ENCODE measurements at regions of chr1 and their contacts with region 1.

Region 1: GRCh38 chr1:209692745-209693504 is 11.7 kb upstream of the HSD11B1 start:
- DNase-seq: peak; percentile 70
- ATAC-seq: peak; percentile 41
- H3K4me3 ChIP-seq: no peak overlapping the region
- H3K4me3 Mint-ChIP-seq: no peak overlapping the region
- H3K27ac ChIP-seq: no peak overlapping the region
- H3K27ac Mint-ChIP-seq: no peak overlapping the region
- H3K4me1 ChIP-seq: peaks cover 4 to 7% of the 10 kb centered on the region in 2 donors
- H3K4me1 Mint-ChIP-seq: peaks cover 3% of the 10 kb centered on the region
- H3K27me3 ChIP-seq: peaks cover 0 to 3% (median 1%) of the 10 kb centered on the region in 4 experiments
- H3K27me3 Mint-ChIP-seq: peaks cover 19% of the 10 kb centered on the region
- CTCF ChIP-seq: peak; percentile 90

Region 2: DNA sequence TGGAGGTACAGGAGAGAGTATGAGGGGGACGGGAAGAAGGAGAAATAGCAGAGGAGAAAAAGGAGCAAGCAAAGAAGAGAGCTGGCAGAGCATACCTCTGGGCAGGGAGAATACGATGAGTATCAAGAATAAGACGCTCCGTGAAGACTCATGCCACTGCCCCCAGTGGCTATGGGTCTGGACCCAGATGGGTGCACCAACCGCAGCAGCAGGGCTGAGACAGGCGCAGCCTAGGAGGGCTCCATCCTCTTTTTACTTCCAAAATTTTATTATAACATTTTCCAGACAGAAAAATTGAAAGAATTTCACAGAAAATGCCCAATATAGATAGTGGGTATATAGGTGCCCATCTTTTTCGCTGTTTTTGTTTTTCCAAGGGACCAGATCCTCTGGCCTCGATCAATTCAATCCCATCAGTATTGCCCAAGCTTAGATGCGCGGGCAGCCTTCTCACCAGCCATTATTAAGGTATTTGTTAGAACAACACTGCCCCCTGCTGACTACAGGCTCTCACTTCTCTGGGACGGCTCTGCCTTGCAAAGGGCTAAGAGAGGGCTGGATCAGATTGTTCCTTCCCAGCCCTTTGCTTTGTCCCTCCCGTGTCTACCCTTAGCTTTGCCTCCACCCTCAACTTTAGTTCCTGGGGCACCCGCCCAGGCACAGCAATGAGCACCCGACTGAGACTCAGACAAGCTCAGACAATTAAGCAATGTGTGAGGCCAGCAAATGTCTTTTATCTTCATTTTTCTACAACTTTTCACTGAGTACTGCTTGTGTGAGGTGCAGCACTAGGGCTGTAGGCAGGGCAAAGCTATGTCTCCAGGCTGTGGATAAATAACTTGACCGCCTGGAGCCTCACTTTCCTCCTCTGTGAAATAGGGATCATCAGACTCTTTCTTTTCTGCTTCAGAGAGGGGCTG is 126.9 kb before region 1 on chr1:
- CTCF ChIA-PET with region 1: interaction called, 59 read pairs
- POLR2A ChIA-PET with region 1: no interaction called
- intact Hi-C with region 1: no loop called
- DNase-seq: peak; percentile 63
- ATAC-seq: no peak
- H3K4me3 ChIP-seq: no peak overlapping the region
- H3K4me3 Mint-ChIP-seq: no peak overlapping the region
- H3K27ac ChIP-seq: no peak overlapping the region
- H3K27ac Mint-ChIP-seq: no peak overlapping the region
- H3K4me1 ChIP-seq: peaks cover 4 to 5% of the 10 kb centered on the region in 2 donors
- H3K4me1 Mint-ChIP-seq: peaks cover 5% of the 10 kb centered on the region
- H3K27me3 ChIP-seq: peaks cover 0 to 20% (median 11%) of the 10 kb centered on the region in 4 experiments
- H3K27me3 Mint-ChIP-seq: peaks cover 39% of the 10 kb centered on the region
- CTCF ChIP-seq: peak; percentile 75

Region 3: DNA sequence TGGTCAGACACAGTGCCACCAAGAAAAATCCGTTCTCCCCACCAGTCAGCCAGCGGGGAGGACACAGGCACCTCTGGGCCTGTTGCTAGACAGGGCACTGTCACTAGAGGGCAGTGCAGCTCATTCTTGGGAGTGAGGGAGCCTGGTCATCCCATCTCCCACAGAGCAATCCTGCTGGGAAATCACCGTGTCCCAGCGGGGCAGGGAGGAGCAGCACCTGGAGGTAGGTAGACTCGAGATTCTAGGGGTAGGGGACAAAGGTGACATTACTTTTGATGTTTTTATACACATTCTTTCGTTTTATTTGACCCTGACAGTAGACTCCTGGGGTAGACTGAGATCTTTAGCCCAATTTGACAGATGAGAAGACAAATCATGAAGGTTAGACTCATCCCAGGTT is 116.1 kb before region 1 on chr1:
- CTCF ChIA-PET with region 1: interaction called, 19 read pairs
- POLR2A ChIA-PET with region 1: no interaction called
- intact Hi-C with region 1: loop called (anchors 1 kb)
- DNase-seq: peak; percentile 56
- ATAC-seq: peak; percentile 51
- H3K4me3 ChIP-seq: no peak overlapping the region
- H3K4me3 Mint-ChIP-seq: no peak overlapping the region
- H3K27ac ChIP-seq: no peak overlapping the region
- H3K27ac Mint-ChIP-seq: no peak overlapping the region
- H3K4me1 ChIP-seq: no peaks in the 10 kb centered on the region
- H3K4me1 Mint-ChIP-seq: no peaks in the 10 kb centered on the region
- H3K27me3 ChIP-seq: peaks cover 0 to 2% (median 0%) of the 10 kb centered on the region in 4 experiments
- H3K27me3 Mint-ChIP-seq: peaks cover 31% of the 10 kb centered on the region
- CTCF ChIP-seq: peak; percentile 84

Region 4: DNA sequence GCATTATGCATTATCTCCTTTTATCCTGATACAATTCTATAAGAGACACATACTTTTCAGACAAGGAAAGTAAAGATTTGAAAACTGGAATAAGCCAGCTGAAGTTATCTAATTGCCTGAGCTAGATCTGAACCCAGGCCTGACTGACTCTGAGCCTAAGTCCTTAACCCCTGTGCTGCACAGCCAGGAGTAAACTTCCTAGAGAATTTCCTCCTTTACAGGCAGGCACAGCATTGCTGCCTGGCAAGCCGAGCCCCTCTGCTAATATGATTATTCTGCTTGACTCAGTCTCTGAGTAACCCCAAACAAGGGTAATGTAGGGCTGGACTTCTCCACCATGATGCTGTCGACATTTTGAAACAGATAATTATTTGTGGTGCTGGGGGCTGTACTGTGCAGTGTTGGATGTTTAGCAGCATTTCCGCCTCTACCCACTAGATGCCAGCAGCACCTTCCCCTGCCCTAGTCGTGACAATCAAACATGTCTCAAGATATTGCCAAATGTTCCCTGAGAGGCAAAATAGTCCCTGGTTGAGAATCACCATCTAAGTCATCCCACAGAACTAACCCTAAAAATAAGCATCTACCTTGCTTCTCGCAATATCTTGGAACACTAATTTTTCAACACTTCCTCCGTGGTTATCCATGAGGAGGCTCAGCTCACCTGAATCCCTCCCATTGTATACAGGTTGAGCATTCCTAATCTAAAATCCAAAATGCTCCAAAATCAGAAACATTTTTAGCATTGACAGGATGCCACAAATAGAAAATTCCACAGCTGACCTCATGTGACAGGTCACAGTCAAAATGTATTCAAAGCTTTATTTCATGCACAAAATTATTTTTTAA is 90.9 kb before region 1 on chr1:
- CTCF ChIA-PET with region 1: no interaction called
- POLR2A ChIA-PET with region 1: no interaction called
- intact Hi-C with region 1: loop called (anchors 2 kb)
- DNase-seq: no peak
- ATAC-seq: no peak
- H3K4me3 ChIP-seq: no peak overlapping the region
- H3K4me3 Mint-ChIP-seq: no peak overlapping the region
- H3K27ac ChIP-seq: no peak overlapping the region
- H3K27ac Mint-ChIP-seq: no peak overlapping the region
- H3K4me1 ChIP-seq: no peaks in the 10 kb centered on the region
- H3K4me1 Mint-ChIP-seq: no peaks in the 10 kb centered on the region
- H3K27me3 ChIP-seq: peaks cover 0 to 11% (median 2%) of the 10 kb centered on the region in 4 experiments
- H3K27me3 Mint-ChIP-seq: peaks cover 17% of the 10 kb centered on the region
- CTCF ChIP-seq: peak; percentile 24

Region 5: DNA sequence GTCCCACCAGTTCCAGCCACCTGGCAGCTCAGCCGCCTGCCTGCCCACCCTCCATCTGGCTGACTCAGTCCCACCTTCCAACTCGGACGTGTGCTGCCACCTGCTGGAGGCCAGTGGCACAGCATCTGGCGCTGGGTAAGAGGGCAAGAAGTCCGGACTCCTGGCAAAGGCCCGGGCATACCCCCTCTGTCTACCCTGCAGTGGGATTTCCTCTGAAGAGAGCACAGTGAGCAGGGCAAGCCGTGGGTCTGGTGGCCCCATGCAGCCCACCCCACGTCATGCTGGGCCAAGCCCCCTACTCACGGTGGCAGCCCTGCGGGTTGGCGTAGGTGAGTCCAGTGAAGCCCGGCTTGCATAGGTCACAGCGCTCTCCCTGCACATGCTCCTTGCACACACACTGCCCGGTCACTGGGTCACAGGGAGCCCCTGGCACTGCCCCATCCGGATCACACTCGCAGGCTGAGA is 65.2 kb before region 1 on chr1:
- CTCF ChIA-PET with region 1: interaction called, 3 read pairs
- POLR2A ChIA-PET with region 1: no interaction called
- intact Hi-C with region 1: loop called (anchors 1 kb)
- DNase-seq: peak; percentile 69
- ATAC-seq: peak; percentile 84
- H3K4me3 ChIP-seq: no peak overlapping the region
- H3K4me3 Mint-ChIP-seq: no peak overlapping the region
- H3K27ac ChIP-seq: no peak overlapping the region
- H3K27ac Mint-ChIP-seq: peak overlapping the region; percentile 2
- H3K4me1 ChIP-seq: no peaks in the 10 kb centered on the region
- H3K4me1 Mint-ChIP-seq: peaks cover 3% of the 10 kb centered on the region
- H3K27me3 ChIP-seq: peaks cover 0 to 7% (median 2%) of the 10 kb centered on the region in 4 experiments
- H3K27me3 Mint-ChIP-seq: peaks cover 9% of the 10 kb centered on the region
- CTCF ChIP-seq: peak; percentile 96

Region 6: DNA sequence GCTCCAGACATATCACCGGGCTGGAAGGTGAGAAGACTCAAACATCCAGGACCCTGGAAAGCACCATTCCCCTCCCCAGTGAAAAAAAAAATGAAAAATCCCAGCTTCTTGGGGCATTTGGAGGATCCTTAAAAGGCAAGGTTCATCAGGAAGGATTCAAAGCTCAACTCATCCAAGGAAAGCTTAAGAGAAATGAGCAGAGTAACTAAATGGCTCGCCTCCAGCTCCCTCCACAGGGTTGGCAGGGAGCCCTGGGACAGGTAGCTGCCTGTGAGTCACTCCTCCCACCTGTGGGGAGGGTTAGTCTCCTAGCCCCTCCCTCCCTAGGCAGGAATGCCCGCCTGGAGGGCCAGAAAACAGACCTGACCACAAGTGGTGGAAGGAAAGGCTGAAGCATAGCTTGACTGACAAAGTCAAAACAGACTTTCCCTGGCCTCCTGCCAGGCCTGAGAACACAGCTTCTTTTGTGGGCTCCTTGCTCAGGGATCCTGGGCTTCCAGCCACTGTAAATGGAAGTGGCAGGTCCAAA is 40.0 kb before region 1 on chr1:
- CTCF ChIA-PET with region 1: interaction called, 3 read pairs
- POLR2A ChIA-PET with region 1: no interaction called
- intact Hi-C with region 1: loop called (anchors 1 kb)
- DNase-seq: no peak
- ATAC-seq: no peak
- H3K4me3 ChIP-seq: no peak overlapping the region
- H3K4me3 Mint-ChIP-seq: no peak overlapping the region
- H3K27ac ChIP-seq: no peak overlapping the region
- H3K27ac Mint-ChIP-seq: no peak overlapping the region
- H3K4me1 ChIP-seq: no peaks in the 10 kb centered on the region
- H3K4me1 Mint-ChIP-seq: no peaks in the 10 kb centered on the region
- H3K27me3 ChIP-seq: peaks cover 0 to 7% (median 0%) of the 10 kb centered on the region in 4 experiments
- H3K27me3 Mint-ChIP-seq: peaks cover 10% of the 10 kb centered on the region
- CTCF ChIP-seq: no peak

Region 7: DNA sequence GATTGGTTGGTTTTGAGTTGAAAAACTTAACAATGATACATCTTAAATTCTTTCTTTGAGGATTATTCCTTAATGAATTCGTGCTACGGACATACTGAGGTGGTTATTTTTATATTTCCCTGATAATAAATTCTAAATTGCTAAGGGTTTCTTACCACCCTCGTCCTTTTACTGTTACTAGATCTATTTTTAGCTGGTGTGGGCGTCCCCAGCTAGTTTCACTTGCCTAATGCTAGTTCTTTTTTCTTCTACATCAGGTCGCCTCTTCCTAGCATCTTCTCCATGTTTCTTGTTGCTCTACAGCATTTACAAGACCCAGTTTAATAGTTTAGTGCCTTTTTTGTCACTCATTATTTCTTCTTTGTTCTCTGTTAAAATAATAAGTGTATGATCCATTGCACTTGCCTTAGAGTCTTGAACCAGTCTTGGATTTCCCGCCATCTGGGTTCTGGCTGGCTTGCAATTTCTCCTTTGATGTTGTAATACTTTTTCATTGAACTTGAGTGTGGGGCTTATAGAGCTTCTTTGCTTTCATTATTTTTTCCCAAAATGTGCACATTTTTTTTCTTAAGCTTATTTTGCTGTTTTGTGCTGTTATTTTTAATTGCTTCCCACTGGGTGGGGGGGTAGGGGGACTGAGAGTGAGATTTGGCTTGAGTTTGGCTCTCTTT is 11.0 kb after region 1 on chr1:
- CTCF ChIA-PET with region 1: interaction called, 12 read pairs
- POLR2A ChIA-PET with region 1: no interaction called
- intact Hi-C with region 1: no loop called
- DNase-seq: no peak
- ATAC-seq: no peak
- H3K4me3 ChIP-seq: no peak overlapping the region
- H3K4me3 Mint-ChIP-seq: no peak overlapping the region
- H3K27ac ChIP-seq: no peak overlapping the region
- H3K27ac Mint-ChIP-seq: no peak overlapping the region
- H3K4me1 ChIP-seq: peaks cover 6 to 10% of the 10 kb centered on the region in 2 donors
- H3K4me1 Mint-ChIP-seq: peaks cover 10% of the 10 kb centered on the region
- H3K27me3 ChIP-seq: peaks cover 0 to 2% (median 0%) of the 10 kb centered on the region in 4 experiments
- H3K27me3 Mint-ChIP-seq: peaks cover 10% of the 10 kb centered on the region
- CTCF ChIP-seq: no peak